ENCODE measurements at regions of chr6 and their contacts with region 1.

Region 1: DNA sequence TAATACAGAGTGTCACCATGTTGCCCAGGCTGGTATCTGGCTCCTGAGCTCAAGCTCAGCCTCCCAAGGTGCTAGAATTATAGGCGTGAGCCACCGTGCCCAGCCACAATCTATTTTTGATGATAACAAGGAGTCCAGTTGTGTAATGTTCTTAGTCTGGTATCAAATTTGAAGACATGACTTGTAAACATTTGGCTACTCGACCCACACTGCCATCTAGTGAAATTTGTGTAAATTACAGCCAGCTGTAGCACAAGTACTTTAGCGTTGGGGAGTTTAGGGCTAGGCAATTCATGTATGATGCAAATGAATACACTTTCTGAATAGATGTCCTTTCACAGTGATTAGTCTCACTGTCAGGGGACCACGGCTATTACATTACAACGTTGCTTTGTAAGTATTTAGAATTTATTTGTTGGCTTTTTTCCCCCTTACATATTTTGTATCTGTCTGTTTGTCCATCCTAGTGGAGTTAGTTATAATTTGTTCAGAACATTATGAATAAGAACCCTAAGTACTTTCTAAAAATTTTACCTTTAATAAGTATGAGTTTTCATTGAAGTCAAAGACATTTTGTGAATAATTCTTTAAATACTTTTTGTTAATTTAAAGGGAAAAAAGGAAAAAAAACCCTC is 139.7 kb downstream of the PRDM13 start:
- DNase-seq: peak in 4 of 6 donors; percentile 23 to 69 (median 39)
- ATAC-seq: peak; percentile 75 to 97 (median 96)
- H3K4me3 ChIP-seq: no peak overlapping the region
- H3K27ac ChIP-seq: no peak overlapping the region
- H3K4me1 ChIP-seq: no peaks in the 10 kb centered on the region
- H3K27me3 ChIP-seq: peaks cover 0 to 2% (median 0%) of the 10 kb centered on the region in 4 donors
- CTCF ChIP-seq: peak; percentile 61 to 86 (median 81)

Region 2: GRCh38 chr6:99467509-99468106 is 278.8 kb before region 1 on chr6:
- intact Hi-C with region 1: loop called in 1 of 3 experiments (anchors 5 kb)
- DNase-seq: no peak
- ATAC-seq: peak in 2 of 4 donors; percentile 57 to 66
- H3K4me3 ChIP-seq: no peak overlapping the region
- H3K27ac ChIP-seq: no peak overlapping the region
- H3K4me1 ChIP-seq: peaks cover 0 to 3% (median 0%) of the 10 kb centered on the region in 3 donors
- H3K27me3 ChIP-seq: no peaks in the 10 kb centered on the region
- CTCF ChIP-seq: peak in 3 of 4 donors; percentile 20 to 55 (median 33)

Region 3: GRCh38 chr6:99645986-99646385 is 100.4 kb before region 1 on chr6:
- intact Hi-C with region 1: no loop called
- DNase-seq: no peak
- ATAC-seq: no peak
- H3K4me3 ChIP-seq: no peak overlapping the region
- H3K27ac ChIP-seq: no peak overlapping the region
- H3K4me1 ChIP-seq: no peaks in the 10 kb centered on the region
- H3K27me3 ChIP-seq: peaks cover 0 to 3% (median 0%) of the 10 kb centered on the region in 4 donors
- CTCF ChIP-seq: no peak

Region 4: DNA sequence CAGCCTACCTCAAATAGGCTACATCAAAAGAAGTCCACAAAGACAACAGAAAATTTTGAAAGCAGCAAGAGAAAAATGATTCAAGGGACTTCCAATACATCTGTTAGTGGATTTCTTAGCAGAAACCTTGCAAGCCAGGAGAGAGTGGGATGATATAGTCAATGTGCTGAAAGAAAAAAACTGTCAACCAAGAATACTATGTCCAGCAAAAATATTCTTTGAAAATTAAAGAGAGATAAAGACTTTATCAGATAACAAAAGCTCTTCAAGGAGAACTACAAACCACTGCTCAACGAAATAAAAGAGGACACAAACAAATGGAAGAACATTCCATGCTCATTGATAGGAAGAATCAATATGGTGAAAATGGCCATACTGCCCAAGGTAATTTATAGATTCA is 213.6 kb after region 1 on chr6:
- intact Hi-C with region 1: no loop called
- DNase-seq: no peak
- ATAC-seq: no peak
- H3K4me3 ChIP-seq: no peak overlapping the region
- H3K27ac ChIP-seq: no peak overlapping the region
- H3K4me1 ChIP-seq: no peaks in the 10 kb centered on the region
- H3K27me3 ChIP-seq: no peaks in the 10 kb centered on the region
- CTCF ChIP-seq: no peak

Region 5: DNA sequence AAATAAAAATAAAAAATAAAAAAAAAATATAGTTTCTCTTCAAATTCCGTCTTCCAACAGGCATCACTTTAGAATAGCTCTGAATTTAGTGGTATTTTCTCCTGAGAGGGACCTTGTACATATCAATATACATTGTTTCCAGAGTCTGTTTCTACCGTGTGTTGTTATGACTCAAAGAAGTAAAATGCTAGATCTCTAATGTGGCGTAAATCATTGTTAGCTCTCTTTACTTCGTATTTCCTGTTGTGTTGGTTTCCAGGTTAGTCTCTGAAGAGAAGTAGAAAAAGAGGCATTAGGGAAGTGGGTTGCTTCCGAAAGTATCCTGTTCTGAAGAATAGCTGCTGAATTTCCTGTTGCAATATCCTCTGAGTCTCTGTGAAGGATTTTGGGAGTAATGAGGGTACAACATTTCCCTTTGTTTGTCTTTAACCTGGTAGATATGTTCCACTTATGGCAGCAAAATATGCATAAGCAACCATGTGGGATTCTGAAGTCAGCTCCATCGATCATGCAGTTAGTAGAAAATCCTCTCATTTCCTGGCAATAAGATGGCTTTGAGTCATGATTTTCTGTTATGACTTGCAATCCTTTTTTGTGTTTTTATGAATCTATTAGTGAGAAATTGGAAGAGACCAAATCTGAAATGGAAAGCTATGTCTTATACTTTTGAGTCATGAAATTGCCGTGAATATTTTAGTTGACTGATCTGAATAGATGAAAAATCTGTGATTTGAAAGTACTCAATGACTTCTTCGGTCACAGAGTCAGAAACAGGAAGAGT is 289.7 kb after region 1 on chr6:
- intact Hi-C with region 1: no loop called
- DNase-seq: no peak
- ATAC-seq: no peak
- H3K4me3 ChIP-seq: no peak overlapping the region
- H3K27ac ChIP-seq: no peak overlapping the region
- H3K4me1 ChIP-seq: no peaks in the 10 kb centered on the region
- H3K27me3 ChIP-seq: no peaks in the 10 kb centered on the region
- CTCF ChIP-seq: no peak

Measured in pancreas (tissue), 10 donors.